A549 (cell line): ENCODE measurements at regions of chr3 and their contacts with region 1.

Region 1: GRCh38 chr3:8441969-8442559 is 59.6 kb upstream of the LMCD1 start:
- DNase-seq: peak; percentile 75 to 87
- ATAC-seq: peak; percentile 25 to 43; a peak in 4 of 6 replicates
- H3K4me3 ChIP-seq: no peak overlapping the region
- H3K27ac ChIP-seq: peak overlapping the region; percentile 94 to 99
- H3K4me1 ChIP-seq: peaks cover 53% of the 10 kb centered on the region
- CTCF ChIP-seq: peak; percentile 91
- EP300 ChIP-seq: no peak
- POLR2A ChIP-seq: no peak
- RAD21 ChIP-seq: peak; percentile 92

Region 2: GRCh38 chr3:8380904-8381704 is 61.0 kb before region 1 on chr3:
- CTCF ChIA-PET with region 1: no interaction called
- POLR2A ChIA-PET with region 1: no interaction called
- DNase-seq: no peak
- ATAC-seq: no peak
- H3K4me3 ChIP-seq: no peak overlapping the region
- H3K27ac ChIP-seq: no peak overlapping the region
- H3K4me1 ChIP-seq: no peaks in the 10 kb centered on the region
- CTCF ChIP-seq: no peak
- EP300 ChIP-seq: no peak
- POLR2A ChIP-seq: no peak
- RAD21 ChIP-seq: no peak

Region 3: GRCh38 chr3:8490079-8490552 is 48.1 kb after region 1 on chr3:
- CTCF ChIA-PET with region 1: interaction called, 14 read pairs
- POLR2A ChIA-PET with region 1: interaction called, 4 read pairs
- DNase-seq: peak; percentile 38 to 56
- ATAC-seq: peak in 1 of 2 experiments; percentile 56; a peak in 3 of 6 replicates
- H3K4me3 ChIP-seq: no peak overlapping the region
- H3K27ac ChIP-seq: peak overlapping the region; percentile 4 to 41; a peak in 2 of 6 replicates
- H3K4me1 ChIP-seq: peaks cover 37% of the 10 kb centered on the region
- CTCF ChIP-seq: no peak
- EP300 ChIP-seq: no peak
- POLR2A ChIP-seq: no peak
- RAD21 ChIP-seq: no peak

Region 4: GRCh38 chr3:8509961-8510360 is 67.9 kb after region 1 on chr3:
- CTCF ChIA-PET with region 1: interaction called, 121 read pairs
- POLR2A ChIA-PET with region 1: interaction called, 194 read pairs
- DNase-seq: peak; percentile 46 to 68
- ATAC-seq: peak; percentile 83 to 86
- H3K4me3 ChIP-seq: no peak overlapping the region
- H3K27ac ChIP-seq: peak overlapping the region; percentile 43 to 72; a peak in 5 of 6 replicates
- H3K4me1 ChIP-seq: peaks cover 58% of the 10 kb centered on the region
- CTCF ChIP-seq: no peak
- EP300 ChIP-seq: no peak
- POLR2A ChIP-seq: no peak
- RAD21 ChIP-seq: no peak

Region 5: DNA sequence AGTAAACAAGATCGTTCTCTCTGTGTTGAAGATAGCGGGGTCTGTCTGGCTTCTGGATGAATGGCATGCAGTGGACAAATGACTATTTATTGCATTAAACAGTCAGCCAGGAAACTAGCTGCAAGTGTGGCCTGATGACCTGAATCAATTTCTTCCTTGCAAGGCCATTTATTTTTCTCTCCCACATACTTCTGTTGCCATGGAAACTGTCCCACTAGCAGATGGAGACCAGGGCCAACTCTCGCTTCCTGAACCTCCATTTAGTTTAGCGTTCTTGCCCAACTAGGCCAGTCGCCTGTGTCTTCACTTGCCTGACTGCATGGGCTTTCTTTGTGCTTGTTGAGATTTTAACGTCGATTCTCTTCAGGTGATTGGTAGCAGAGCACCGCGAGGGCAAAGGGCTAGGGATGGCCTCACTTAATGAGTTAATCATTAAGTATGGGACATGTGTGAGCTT is 87.1 kb after region 1 on chr3:
- CTCF ChIA-PET with region 1: interaction called, 12 read pairs
- POLR2A ChIA-PET with region 1: interaction called, 4 read pairs
- DNase-seq: peak in 1 of 2 experiments; percentile 34
- ATAC-seq: peak in 1 of 2 experiments; percentile 8; a peak in 1 of 6 replicates
- H3K4me3 ChIP-seq: no peak overlapping the region
- H3K27ac ChIP-seq: peak overlapping the region in 1 of 2 experiments; percentile 73; a peak in 4 of 6 replicates
- H3K4me1 ChIP-seq: peaks cover 51% of the 10 kb centered on the region
- CTCF ChIP-seq: no peak
- EP300 ChIP-seq: no peak
- POLR2A ChIP-seq: no peak
- RAD21 ChIP-seq: no peak

Region 6: GRCh38 chr3:8562081-8562595 is 120.1 kb after region 1 on chr3:
- CTCF ChIA-PET with region 1: interaction called, 16 read pairs
- POLR2A ChIA-PET with region 1: no interaction called
- DNase-seq: no peak
- ATAC-seq: peak in 1 of 2 experiments; percentile 22; a peak in 3 of 6 replicates
- H3K4me3 ChIP-seq: no peak overlapping the region
- H3K27ac ChIP-seq: no peak overlapping the region
- H3K4me1 ChIP-seq: no peaks in the 10 kb centered on the region
- CTCF ChIP-seq: no peak
- EP300 ChIP-seq: no peak
- POLR2A ChIP-seq: no peak
- RAD21 ChIP-seq: no peak

Region 7: DNA sequence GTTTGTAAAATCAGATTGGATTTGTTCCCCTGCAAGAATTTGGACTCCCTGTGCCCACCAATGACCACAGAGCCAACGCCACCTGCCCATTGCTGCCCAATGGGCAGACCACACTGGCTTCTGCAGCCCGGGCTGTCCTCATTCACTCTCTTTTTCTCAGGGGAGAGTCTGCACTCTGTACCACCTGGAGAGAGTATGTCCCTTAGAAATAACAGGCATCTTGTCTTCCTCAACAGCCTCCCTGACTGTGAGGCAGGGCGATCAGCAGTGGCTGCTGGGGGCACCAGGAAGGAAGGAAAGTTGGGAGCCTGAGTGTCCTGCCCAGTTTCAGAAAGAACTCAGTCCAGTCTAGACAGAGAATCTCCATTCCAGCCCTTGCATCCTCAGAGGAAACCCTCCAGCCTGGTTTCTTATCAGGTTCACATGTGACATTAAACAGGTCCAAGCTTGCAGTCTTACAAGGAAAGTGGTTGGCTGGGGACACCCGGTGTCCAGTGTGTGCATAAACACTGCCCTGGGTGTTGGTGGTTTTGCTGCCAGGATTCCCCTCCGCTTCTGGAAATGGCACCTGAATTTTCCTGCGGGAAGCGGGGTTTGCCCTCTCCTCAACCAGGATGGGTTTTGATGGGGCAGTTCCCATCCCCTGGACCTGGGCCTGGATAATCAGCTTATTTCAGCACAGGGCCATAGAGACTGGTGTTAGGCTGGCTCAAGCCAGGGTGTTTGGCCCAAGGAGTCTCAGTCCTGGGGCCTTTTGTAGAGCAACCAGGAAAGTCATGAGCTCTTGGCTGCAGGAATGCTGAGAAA is 165.4 kb after region 1 on chr3:
- CTCF ChIA-PET with region 1: interaction called, 16 read pairs
- POLR2A ChIA-PET with region 1: no interaction called
- DNase-seq: peak; percentile 25 to 64
- ATAC-seq: peak; percentile 80 to 93; a peak in 4 of 6 replicates
- H3K4me3 ChIP-seq: no peak overlapping the region
- H3K27ac ChIP-seq: no peak overlapping the region
- H3K4me1 ChIP-seq: 0 out of 3 replicates have a peak, but pooled peaks cover 3% of the 10 kb centered on the region
- CTCF ChIP-seq: peak; percentile 37
- EP300 ChIP-seq: no peak
- POLR2A ChIP-seq: no peak
- RAD21 ChIP-seq: peak; percentile 68 to 72

Region 8: DNA sequence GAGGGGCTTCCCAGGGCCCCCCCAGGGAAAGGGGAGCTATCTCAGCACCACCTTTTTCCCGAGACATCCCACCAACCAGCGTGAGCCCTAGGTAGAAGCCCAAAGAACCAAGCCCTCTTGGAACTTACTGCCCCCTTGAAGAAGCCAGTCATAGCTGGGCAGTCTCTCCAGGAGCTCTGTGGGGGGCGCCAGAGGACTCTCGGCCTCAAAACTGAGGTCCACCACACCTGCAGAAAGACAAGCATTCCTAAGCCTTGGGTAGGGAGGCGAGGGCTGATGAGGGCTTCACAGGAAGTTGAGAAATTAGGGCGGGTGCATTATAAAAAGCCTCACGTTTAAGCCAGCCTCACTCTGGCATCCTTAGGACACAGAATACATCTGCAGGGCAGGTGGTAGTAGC is 193.6 kb after region 1 on chr3:
- CTCF ChIA-PET with region 1: interaction called, 10 read pairs
- POLR2A ChIA-PET with region 1: no interaction called
- DNase-seq: no peak
- ATAC-seq: no peak
- H3K4me3 ChIP-seq: no peak overlapping the region
- H3K27ac ChIP-seq: no peak overlapping the region
- H3K4me1 ChIP-seq: peaks cover 22% of the 10 kb centered on the region
- CTCF ChIP-seq: no peak
- EP300 ChIP-seq: no peak
- POLR2A ChIP-seq: no peak
- RAD21 ChIP-seq: no peak